Common myeloid progenitor, CD34-positive (primary cell): ENCODE measurements at regions of chr14 and their contacts with region 1.

Region 1: GRCh38 chr14:70027785-70028428 is 148.7 kb downstream of the SMOC1 start:
- DNase-seq: peak; percentile 45 to 71 (median 61)
- H3K4me3 ChIP-seq: no peak overlapping the region
- H3K27ac ChIP-seq: no peak overlapping the region
- H3K4me1 ChIP-seq: no peaks in the 10 kb centered on the region
- H3K27me3 ChIP-seq: peaks cover 0 to 6% (median 0%) of the 10 kb centered on the region in 5 experiments

Region 2: DNA sequence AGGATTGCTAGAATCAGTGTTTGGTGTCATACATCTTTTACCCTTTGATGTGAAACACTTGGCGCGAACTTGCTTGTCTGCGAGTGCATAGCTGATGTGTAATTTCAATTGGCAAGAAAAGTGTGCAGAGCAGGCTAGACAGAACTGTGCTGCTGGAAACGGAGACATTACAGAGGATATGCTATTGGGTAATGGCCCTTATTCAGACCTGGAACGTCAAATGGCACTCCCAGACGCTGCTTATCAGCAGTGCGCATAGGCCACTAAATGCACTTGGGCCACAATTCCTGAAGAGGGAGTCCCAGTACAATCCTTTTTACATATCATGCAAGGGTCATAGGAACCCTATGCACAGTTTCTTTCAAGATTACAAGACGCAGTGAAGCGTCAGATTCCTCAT is 215.2 kb before region 1 on chr14:
- CTCF ChIA-PET with region 1: interaction called, 46 read pairs
- POLR2A ChIA-PET with region 1: no interaction called
- DNase-seq: no peak
- H3K4me3 ChIP-seq: no peak overlapping the region
- H3K27ac ChIP-seq: no peak overlapping the region
- H3K4me1 ChIP-seq: no peaks in the 10 kb centered on the region
- H3K27me3 ChIP-seq: peaks cover 0 to 17% (median 0%) of the 10 kb centered on the region in 5 experiments

Region 3: GRCh38 chr14:69818757-69819191 is 209.1 kb before region 1 on chr14:
- CTCF ChIA-PET with region 1: interaction called, 46 read pairs
- POLR2A ChIA-PET with region 1: no interaction called
- DNase-seq: peak; percentile 70 to 82 (median 75)
- H3K4me3 ChIP-seq: no peak overlapping the region
- H3K27ac ChIP-seq: no peak overlapping the region
- H3K4me1 ChIP-seq: peaks cover 0 to 2% (median 0%) of the 10 kb centered on the region in 4 experiments
- H3K27me3 ChIP-seq: peaks cover 0 to 17% (median 2%) of the 10 kb centered on the region in 5 experiments

Region 4: GRCh38 chr14:69877492-69877891 is 150.4 kb before region 1 on chr14:
- CTCF ChIA-PET with region 1: interaction called, 11 read pairs
- POLR2A ChIA-PET with region 1: no interaction called
- DNase-seq: peak; percentile 13 to 22 (median 18)
- H3K4me3 ChIP-seq: no peak overlapping the region
- H3K27ac ChIP-seq: no peak overlapping the region
- H3K4me1 ChIP-seq: peaks cover 0 to 15% (median 9%) of the 10 kb centered on the region in 4 experiments
- H3K27me3 ChIP-seq: peaks cover 0 to 55% (median 24%) of the 10 kb centered on the region in 5 experiments

Region 5: DNA sequence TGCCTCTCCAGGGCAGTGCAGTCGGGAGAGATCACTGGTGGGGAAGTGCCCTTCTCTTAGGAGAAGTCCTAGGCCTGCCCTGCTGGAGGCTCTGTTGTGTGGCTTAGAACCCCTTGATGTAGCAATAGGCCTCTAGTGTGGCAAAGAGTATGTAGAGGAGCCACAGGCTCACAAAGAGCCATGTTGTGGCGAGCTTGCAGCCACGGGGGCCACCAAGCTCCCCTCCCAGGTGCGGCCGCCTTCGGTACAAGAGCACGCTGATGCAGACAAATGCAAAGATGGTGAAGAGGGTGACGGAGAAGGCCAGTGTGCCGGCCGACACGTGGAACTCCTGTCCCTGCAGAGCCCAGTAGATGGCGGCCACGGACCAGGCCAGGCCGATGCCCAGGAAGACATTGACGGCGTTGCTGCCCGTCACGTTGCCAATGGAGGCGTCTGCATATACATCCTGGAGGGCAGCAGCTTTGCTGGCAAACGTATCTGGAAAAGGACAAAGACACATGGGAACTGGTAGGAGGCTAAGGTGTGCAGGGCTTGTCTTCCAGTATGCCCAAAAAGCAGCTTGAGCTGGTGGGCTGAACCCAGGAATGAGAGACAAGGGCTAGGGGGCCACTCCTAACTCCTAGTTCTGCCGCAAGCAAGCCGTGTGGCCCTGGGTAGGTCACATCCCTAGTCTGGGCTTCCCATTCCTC is 18.1 kb after region 1 on chr14:
- CTCF ChIA-PET with region 1: interaction called, 18 read pairs
- POLR2A ChIA-PET with region 1: no interaction called
- DNase-seq: peak; percentile 14 to 59 (median 48)
- H3K4me3 ChIP-seq: no peak overlapping the region
- H3K27ac ChIP-seq: no peak overlapping the region
- H3K4me1 ChIP-seq: peaks cover 0 to 5% (median 1%) of the 10 kb centered on the region in 4 experiments
- H3K27me3 ChIP-seq: no peaks in the 10 kb centered on the region

Region 6: DNA sequence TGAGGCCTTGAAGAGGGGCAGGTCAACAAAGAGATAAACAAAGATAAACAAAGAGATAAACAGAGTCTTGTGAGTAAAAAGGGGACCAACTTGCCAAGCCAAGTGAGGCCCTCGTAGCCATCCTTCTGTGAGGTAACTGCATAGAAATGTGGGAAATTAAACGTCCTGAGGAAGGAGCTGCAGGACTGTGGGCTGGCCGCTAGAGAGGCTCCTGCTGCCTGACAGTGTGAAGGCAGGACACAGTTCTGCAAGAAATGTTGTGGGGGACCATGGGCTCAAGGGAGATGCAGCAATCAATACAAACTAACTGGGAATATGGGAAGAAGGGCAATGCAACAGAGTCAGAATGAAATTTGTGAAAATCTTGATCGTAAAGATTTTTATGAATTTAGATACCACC is 69.0 kb after region 1 on chr14:
- CTCF ChIA-PET with region 1: no interaction called
- POLR2A ChIA-PET with region 1: no interaction called
- DNase-seq: no peak
- H3K4me3 ChIP-seq: no peak overlapping the region
- H3K27ac ChIP-seq: no peak overlapping the region
- H3K4me1 ChIP-seq: peaks cover 0 to 15% (median 13%) of the 10 kb centered on the region in 4 experiments
- H3K27me3 ChIP-seq: no peaks in the 10 kb centered on the region